Right ventricle myocardium inferior (tissue), 1 donor: ENCODE measurements at regions of chr1 and their contacts with region 1.

Region 1: DNA sequence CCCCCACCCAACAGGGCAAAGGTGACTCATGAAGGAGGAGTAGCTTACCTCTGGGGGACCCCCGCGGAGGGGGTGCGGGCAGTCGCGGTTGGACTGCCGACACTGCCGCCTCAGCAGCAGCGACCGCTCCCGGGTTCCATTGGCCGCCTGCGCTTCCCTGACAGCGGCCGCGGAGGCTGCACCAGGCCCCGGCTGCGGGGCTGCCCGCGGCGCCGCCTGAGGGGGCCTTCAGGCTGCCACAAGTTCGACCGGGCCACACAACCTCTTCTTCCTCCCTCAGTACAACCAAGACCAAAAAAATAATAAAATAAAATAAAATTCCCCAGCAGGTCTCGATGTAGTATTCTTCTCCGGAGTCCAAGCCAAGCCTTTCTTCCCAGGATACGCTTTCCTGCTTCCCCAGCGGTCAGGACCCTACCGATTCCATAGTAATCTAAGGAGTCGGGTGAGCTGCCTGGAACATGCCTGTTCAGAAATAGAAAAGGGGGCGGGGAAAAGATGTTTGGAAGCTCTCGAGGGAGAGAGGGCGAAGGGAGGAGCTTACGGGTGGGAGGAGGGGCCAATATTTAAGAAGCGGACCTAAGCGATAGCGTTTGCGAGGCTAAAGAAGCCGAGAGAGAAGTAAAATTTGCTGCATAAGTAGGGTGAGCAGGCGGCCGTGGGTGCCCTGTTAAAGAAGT is at the start of gene PI4KB:
- DNase-seq: peak; percentile 88
- ATAC-seq: peak; percentile 98
- total RNA-seq, gene PI4KB: 53.7 TPM

Region 2: GRCh38 chr1:151198255-151199127 is 128.9 kb before region 1 on chr1 and contains the start of gene PIP5K1A:
- intact Hi-C with region 1: loop called (anchors 5 kb)
- DNase-seq: peak; percentile 100
- ATAC-seq: peak; percentile 97
- total RNA-seq, gene PIP5K1A: 34.8 TPM

Region 3: GRCh38 chr1:151281969-151282882 is 45.1 kb before region 1 on chr1 and contains the start of gene ZNF687:
- intact Hi-C with region 1: loop called (anchors 2 kb)
- DNase-seq: peak; percentile 100
- ATAC-seq: peak; percentile 95
- total RNA-seq, gene ZNF687: 10.8 TPM

Region 4: DNA sequence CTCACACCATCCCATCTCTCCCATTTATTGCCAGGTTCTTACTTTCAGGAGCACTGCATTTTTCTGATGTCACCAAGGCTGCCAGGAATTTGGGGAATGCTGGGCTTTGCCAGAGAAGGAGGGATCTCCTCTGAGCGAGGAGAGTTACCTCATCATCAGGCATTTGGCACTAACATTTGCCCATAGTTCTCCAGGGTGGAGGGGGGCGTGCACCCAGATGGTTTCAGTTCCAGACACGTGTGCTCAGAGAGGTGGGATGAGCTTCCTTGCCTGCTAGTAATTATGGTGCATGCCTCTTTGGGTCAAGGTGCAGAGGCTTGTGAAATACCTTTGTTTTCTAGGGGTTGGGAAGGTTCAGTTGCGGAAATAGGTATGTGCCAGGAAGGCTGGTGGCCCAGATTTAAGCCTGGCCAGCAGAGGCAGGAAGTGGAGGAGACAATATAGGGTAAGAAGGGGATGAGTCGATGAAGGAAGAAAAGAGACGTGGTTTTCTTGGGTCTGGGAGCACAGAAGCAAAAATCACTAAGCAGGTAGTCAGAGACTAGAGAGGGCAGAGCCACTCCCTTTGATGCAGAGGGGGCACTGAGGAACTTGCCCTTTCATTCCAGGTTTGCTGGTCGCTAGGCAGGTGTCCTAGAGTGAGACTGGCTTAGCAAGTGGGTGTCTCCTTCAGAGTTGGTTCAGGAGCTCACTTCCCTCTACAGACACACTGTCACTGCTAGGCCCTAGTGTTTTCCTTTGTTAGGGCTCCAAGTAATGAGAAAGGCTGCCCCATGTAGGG is 219.9 kb after region 1 on chr1:
- intact Hi-C with region 1: no loop called
- DNase-seq: no peak
- ATAC-seq: peak; percentile 90